ENCODE measurements at regions of chr1 and their contacts with region 1.

Region 1: DNA sequence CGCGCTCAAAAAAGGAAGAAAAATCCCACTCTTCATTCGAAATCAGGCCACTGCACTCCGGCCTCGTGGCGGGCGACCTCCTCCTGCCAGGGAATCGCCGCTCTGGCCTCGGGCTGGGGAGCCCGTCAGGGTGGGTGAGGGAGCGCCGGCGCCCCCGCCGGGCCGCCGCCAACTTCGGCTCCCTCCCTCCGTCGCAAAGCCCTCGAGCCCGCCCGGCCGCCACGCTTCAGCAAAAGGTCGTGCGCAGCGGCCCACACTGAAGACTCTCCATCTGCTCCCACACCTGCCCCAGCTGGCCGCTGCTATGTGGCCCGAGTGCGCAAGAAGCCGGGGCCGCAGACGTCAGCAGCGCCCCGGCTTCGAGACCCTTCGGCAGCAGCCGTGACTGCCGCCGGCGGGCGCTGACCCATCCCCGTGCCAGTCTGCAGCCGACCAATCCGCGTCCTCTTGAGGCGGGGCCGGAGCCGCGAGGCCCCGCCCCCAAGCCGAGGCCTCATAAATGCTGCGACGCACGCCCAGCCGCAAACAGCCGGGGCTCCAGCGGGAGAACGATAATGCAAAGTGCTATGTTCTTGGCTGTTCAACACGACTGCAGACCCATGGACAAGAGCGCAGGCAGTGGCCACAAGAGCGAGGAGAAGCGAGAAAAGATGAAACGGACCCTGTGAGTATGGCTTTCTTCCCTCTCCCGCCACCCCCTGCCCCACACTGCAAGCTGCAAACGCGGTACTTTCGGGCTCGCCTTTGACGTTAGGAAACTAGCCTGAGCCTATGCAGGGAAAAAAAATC is at the start of gene RGS2:
- DNase-seq: peak; percentile 90 to 94 (median 93)
- H3K4me3 ChIP-seq: peak within 1 kb of the TSS; percentile 90 to 100 (median 99)
- H3K4me3 Mint-ChIP-seq: peak within 1 kb of the TSS; percentile 98 to 100
- H3K27ac ChIP-seq: peak within 1 kb of the TSS; percentile 89 to 93
- H3K27ac Mint-ChIP-seq: peak within 1 kb of the TSS; percentile 97 to 100 (median 99)
- H3K4me1 ChIP-seq: peaks cover 38 to 51% of the 10 kb centered on the region in 2 donors
- H3K4me1 Mint-ChIP-seq: peaks cover 48% of the 10 kb centered on the region
- H3K27me3 ChIP-seq: no peaks in the 10 kb centered on the region
- H3K27me3 Mint-ChIP-seq: peaks cover 0 to 15% (median 0%) of the 10 kb centered on the region in 3 donors
- CTCF ChIP-seq: no peak
- polyA plus RNA-seq, gene RGS2: 974 to 3,307 (median 1,708) TPM

Region 2: DNA sequence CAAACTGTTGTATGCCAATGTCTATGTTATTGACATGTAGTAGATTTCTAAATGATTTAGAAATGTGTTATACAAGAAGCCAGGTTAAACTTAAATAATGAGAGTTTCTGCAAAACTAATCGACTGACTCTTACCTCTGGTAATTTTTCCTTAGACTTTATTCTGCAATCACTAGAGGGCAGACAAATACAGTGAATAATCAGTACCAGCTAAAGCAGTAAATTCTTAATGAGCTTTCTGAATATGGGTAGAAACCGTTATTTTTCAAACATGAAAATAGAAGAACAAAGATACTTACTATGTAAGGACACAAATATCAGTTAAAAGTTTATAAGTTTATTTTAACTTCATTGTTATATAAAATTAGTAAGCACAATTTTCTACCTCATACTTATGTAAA is 331.1 kb before region 1 on chr1:
- intact Hi-C with region 1: loop called in 1 of 2 experiments (anchors 5 kb)
- DNase-seq: peak in 2 of 3 donors; percentile 20 to 43
- H3K4me3 ChIP-seq: no peak overlapping the region
- H3K4me3 Mint-ChIP-seq: no peak overlapping the region
- H3K27ac ChIP-seq: no peak overlapping the region
- H3K27ac Mint-ChIP-seq: no peak overlapping the region
- H3K4me1 ChIP-seq: no peaks in the 10 kb centered on the region
- H3K4me1 Mint-ChIP-seq: peaks cover 5% of the 10 kb centered on the region
- H3K27me3 ChIP-seq: no peaks in the 10 kb centered on the region
- H3K27me3 Mint-ChIP-seq: peaks cover 0 to 5% (median 3%) of the 10 kb centered on the region in 3 donors
- CTCF ChIP-seq: peak; percentile 63

Region 3: DNA sequence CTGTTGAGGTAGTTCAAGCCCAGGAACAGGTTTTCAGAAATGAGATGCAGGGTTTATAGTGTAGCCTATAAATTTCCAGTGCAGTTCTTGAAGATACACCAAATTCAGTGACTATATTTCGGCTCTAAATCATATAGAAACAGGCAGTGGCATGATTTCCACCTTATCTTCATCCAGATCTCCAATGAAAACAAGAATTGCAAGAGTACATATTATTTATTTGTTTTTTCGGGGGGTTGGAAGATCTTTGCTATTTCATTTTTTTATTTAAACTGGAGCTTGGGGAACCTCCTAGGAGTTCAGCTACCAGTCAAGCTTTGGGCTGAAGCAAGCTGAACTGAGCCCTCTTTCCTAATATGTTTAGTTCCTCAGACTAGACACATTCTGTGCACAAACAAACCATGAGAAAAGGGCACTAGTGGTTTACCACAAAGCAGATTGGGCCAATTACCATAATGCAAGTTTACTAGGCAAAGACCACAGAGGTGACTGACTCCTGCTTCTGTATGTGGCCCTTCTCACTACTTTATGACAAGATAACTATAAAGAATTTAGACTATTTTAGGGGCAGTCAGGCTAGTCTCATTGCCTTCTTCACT is 68.7 kb after region 1 on chr1:
- intact Hi-C with region 1: loop called (anchors 2 to 5 kb)
- DNase-seq: peak; percentile 60 to 84 (median 70)
- H3K4me3 ChIP-seq: peak overlapping the region in 1 of 3 experiments; percentile 49
- H3K4me3 Mint-ChIP-seq: peak overlapping the region in 1 of 2 donors; percentile 69
- H3K27ac ChIP-seq: peak overlapping the region in 1 of 2 donors; percentile 64
- H3K27ac Mint-ChIP-seq: peak overlapping the region; percentile 63 to 89 (median 75)
- H3K4me1 ChIP-seq: peaks cover 77 to 84% of the 10 kb centered on the region in 2 donors
- H3K4me1 Mint-ChIP-seq: peaks cover 80% of the 10 kb centered on the region
- H3K27me3 ChIP-seq: no peaks in the 10 kb centered on the region
- H3K27me3 Mint-ChIP-seq: peaks cover 0 to 2% (median 0%) of the 10 kb centered on the region in 3 donors
- CTCF ChIP-seq: no peak

Region 4: GRCh38 chr1:192951691-192952460 is 143.2 kb after region 1 on chr1:
- intact Hi-C with region 1: loop called (anchors 5 kb)
- DNase-seq: peak; percentile 78 to 93 (median 88)
- H3K4me3 ChIP-seq: peak overlapping the region in 1 of 3 experiments; percentile 10
- H3K4me3 Mint-ChIP-seq: no peak overlapping the region
- H3K27ac ChIP-seq: peak overlapping the region in 1 of 2 donors; percentile 67
- H3K27ac Mint-ChIP-seq: peak overlapping the region; percentile 86 to 94 (median 90)
- H3K4me1 ChIP-seq: peaks cover 21 to 33% of the 10 kb centered on the region in 2 donors
- H3K4me1 Mint-ChIP-seq: peaks cover 30% of the 10 kb centered on the region
- H3K27me3 ChIP-seq: no peaks in the 10 kb centered on the region
- H3K27me3 Mint-ChIP-seq: no peaks in the 10 kb centered on the region
- CTCF ChIP-seq: no peak

Region 5: GRCh38 chr1:193121616-193122593 is 313.2 kb after region 1 on chr1 and contains the start of gene CDC73:
- intact Hi-C with region 1: loop called (anchors 5 kb)
- DNase-seq: peak; percentile 93 to 97 (median 96)
- H3K4me3 ChIP-seq: peak within 1 kb of the TSS; percentile 67 to 92 (median 77)
- H3K4me3 Mint-ChIP-seq: peak within 1 kb of the TSS; percentile 93 to 95
- H3K27ac ChIP-seq: peak within 1 kb of the TSS; percentile 93 to 94
- H3K27ac Mint-ChIP-seq: peak within 1 kb of the TSS; percentile 96 to 99 (median 98)
- H3K4me1 ChIP-seq: peaks cover 16 to 29% of the 10 kb centered on the region in 2 donors
- H3K4me1 Mint-ChIP-seq: peaks cover 36% of the 10 kb centered on the region
- H3K27me3 ChIP-seq: no peaks in the 10 kb centered on the region
- H3K27me3 Mint-ChIP-seq: peaks cover 0 to 7% (median 2%) of the 10 kb centered on the region in 3 donors
- CTCF ChIP-seq: peak; percentile 93
- polyA plus RNA-seq, gene CDC73: 14.2 to 60.3 (median 57.2) TPM

Region 6: GRCh38 chr1:193325771-193326170 is 517.1 kb after region 1 on chr1:
- intact Hi-C with region 1: no loop called
- DNase-seq: no peak
- H3K4me3 ChIP-seq: no peak overlapping the region
- H3K4me3 Mint-ChIP-seq: no peak overlapping the region
- H3K27ac ChIP-seq: no peak overlapping the region
- H3K27ac Mint-ChIP-seq: no peak overlapping the region
- H3K4me1 ChIP-seq: no peaks in the 10 kb centered on the region
- H3K4me1 Mint-ChIP-seq: no peaks in the 10 kb centered on the region
- H3K27me3 ChIP-seq: no peaks in the 10 kb centered on the region
- H3K27me3 Mint-ChIP-seq: peaks cover 0 to 2% (median 0%) of the 10 kb centered on the region in 3 donors
- CTCF ChIP-seq: no peak

Measured in CD14-positive monocyte (primary cell).